Activated CD4-positive, alpha-beta T cell treated with anti-CD3 and anti-CD28 coated beads, Interleukin-2, amount 10 ng/mL, durations not matched to agents 24 days and 14 days (primary cell): ENCODE measurements at regions of chr6 and their contacts with region 1.

Region 1: DNA sequence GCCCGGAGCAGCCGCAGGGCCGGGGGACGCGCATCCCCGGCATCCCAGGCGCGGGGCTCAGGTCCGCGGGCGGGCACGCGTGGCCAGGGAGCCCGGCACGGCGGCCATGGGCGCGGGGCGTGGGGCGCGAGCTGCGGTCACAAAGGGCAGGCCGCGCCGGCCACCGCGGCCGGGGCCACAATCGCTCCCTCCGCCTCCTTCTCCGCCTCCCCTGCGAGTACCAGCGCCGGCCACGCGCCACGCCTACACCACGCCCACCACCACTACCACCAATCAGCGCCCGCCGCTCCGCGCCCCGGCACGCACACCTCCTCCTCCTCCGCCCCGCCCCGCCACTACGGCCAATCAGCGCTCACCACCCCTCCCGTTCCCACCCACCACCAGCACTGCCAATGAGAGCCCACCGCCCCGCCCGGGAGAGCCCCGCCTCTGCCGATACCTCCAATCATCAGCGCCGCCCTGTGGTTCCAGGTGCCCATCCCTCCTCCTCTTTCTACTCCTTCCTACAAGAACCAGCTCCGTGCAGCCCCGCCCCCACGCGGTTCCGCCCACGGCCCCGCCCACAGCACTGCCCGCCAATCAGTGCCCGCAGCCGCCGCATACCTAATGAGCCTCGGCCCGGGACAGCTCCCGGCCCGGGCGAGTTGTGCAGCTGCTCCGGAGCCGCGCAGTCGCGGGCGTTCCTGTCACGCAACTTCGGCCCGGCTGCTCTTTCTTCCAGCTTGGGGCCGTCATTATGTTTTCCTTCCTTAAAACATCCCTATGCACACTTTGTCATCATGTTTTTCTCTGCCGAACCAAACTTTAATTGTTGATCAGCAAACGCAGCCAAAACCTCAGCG is at the start of gene RPS6KA2:
- DNase-seq: peak; percentile 100
- H3K4me3 Mint-ChIP-seq: peak within 1 kb of the TSS; percentile 91
- H3K27ac Mint-ChIP-seq: peak within 1 kb of the TSS; percentile 83
- H3K4me1 Mint-ChIP-seq: peaks cover 17% of the 10 kb centered on the region
- H3K27me3 Mint-ChIP-seq: peaks cover 46% of the 10 kb centered on the region
- total RNA-seq, gene RPS6KA2: 2.8 and 3.1 TPM in 2 replicates

Region 2: DNA sequence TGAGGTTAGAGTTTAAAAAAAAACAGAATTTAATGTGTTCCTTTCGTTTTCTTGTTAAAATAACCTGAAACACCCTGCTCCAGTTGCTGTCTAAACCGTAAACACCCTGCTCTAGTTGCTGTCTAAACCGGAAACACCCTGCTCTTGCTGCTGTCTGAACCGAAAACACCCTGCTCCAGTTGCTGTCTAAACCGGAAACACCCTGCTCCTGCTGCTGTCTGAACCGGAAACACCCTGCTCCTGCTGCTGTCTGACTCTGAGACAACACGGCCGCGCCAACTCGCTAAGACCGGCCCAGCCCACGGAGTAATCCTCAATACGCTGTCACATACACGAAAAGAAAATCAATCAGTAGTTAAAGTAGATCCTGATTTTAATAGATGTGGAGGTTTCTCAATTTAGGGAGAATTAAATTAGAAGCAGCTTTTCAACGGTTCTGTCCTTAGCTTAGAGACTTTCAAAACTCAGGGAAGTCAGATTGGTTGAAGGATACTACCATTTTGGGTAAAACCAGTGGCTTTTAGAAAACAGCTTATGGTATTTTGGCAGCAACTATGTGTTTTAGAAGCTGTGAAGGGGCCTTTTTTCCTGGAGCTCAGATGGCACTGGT is 139.1 kb before region 1 on chr6:
- intact Hi-C with region 1: loop called (anchors 5 kb)
- DNase-seq: peak; percentile 90
- H3K4me3 Mint-ChIP-seq: peak overlapping the region; percentile 71
- H3K27ac Mint-ChIP-seq: peak overlapping the region; percentile 95
- H3K4me1 Mint-ChIP-seq: peaks cover 13% of the 10 kb centered on the region
- H3K27me3 Mint-ChIP-seq: no peaks in the 10 kb centered on the region

Region 3: DNA sequence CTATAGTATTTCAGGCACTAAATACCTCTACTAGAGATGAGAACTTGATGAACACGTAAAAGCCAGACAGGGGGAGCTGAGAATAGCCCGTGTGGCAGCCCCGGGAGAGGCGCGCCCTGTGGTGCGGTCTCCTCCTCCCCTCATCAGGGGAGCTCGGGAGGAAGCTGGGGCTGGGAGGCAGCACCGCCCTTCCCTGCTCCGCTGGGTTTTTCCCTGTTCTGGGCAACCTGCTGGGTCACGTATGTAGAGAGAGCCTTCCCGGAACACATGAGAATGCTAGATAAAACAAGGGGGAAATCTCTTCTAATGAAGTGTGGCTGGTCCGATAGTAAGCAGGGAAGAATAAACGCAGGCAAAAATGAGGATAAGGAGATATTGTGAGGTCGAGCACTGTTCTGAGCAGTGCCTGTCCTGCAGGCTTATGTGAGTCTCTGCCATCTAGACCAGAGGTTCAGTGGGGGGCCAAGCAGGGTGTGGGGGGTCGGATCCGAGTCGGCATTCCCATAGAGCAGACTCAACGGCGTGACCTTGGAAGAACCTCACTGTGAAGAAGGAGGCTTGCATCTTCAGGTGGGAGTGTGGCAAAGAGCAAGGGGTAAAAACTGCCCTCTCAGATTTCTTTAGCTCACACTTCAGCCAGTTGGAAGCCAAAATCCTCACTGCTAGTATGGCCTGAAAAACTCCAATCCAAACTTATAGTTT is 13.2 kb after region 1 on chr6:
- intact Hi-C with region 1: no loop called
- DNase-seq: no peak
- H3K4me3 Mint-ChIP-seq: peak overlapping the region; percentile 49
- H3K27ac Mint-ChIP-seq: no peak overlapping the region
- H3K4me1 Mint-ChIP-seq: peaks cover 10% of the 10 kb centered on the region
- H3K27me3 Mint-ChIP-seq: peaks cover 38% of the 10 kb centered on the region

Region 4: GRCh38 chr6:166956444-166957086 is 329.3 kb after region 1 on chr6 and contains the start of gene RNASET2:
- intact Hi-C with region 1: loop called (anchors 2 kb)
- DNase-seq: peak; percentile 100
- H3K4me3 Mint-ChIP-seq: peak within 1 kb of the TSS; percentile 95
- H3K27ac Mint-ChIP-seq: peak within 1 kb of the TSS; percentile 98
- H3K4me1 Mint-ChIP-seq: peaks cover 65% of the 10 kb centered on the region
- H3K27me3 Mint-ChIP-seq: no peaks in the 10 kb centered on the region
- total RNA-seq, gene RNASET2: 93.3 and 108 TPM in 2 replicates

Region 5: DNA sequence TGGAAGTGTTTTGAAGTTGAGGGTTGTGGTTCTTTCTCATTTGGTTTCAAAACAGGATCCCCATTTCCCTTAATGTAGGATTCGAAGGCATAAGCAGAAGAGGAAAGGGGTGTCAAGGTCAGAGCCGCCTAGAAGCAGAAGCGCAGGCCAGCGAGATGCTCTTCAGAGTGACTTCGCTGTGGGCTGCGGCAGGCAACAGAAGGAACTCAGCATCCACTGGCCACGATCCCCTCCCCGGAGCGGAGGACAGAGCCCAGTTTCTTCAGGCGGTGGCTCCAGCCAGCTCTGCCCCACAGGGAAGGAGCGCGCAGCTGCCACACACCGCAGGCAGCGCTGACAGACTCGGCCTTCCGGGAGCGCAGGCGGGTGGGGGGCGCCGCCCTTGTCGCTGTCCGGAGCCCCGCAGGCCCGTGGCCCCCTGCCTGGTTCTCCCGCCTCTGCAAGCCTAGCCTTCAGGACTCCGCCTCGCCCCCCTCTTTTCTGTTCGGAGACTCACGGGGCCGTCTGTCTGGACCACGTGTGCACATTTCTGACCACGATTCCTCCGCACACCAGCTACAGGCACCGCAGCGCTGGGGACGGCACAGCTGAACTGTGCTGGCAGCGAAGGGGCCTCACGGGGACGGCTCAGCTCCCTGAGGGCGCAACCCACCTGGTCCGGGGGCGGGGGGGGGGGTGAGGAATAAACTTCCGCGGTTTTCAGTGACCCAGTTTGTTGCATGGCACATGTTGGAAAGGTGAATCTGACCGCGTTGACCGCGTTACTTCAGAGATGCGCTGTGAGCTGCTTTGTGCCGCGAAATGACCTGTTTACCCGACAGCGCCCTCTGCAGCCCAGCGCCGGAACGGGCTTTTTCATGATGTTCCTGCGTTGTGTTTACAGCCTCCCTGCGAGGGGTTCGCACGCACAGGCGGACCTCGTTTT is 723.7 kb after region 1 on chr6:
- intact Hi-C with region 1: loop called (anchors 10 kb)
- DNase-seq: peak; percentile 95
- H3K4me3 Mint-ChIP-seq: peak overlapping the region; percentile 80
- H3K27ac Mint-ChIP-seq: peak overlapping the region; percentile 87
- H3K4me1 Mint-ChIP-seq: peaks cover 18% of the 10 kb centered on the region
- H3K27me3 Mint-ChIP-seq: peaks cover 40% of the 10 kb centered on the region